K562 (cell line): ENCODE measurements at regions of chr16 and their contacts with region 1.

Region 1: DNA sequence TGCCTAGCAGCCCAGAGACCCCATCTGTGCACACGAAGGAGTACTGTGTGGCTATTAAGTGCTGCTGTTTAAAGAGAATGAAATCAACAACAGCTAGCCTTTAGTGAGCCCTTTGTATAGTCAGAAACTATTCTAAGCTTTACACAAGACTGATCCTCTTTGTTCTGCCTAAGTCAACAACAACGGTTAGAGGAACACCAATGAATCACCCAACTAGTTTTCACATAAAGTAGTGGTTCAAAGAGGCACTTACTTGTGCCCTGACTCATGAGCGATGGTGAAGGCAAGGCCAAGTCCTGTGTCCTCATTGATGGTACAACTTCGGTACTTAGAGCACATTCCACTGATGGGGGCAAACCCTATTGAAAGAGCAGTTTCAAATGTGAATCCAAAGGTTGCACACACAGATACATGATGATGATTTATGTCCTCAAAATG is 75.8 kb downstream of the ADAMTS18 start:
- DNase-seq: no peak
- ATAC-seq: no peak
- H3K4me3 ChIP-seq: no peak overlapping the region
- H3K27ac ChIP-seq: no peak overlapping the region
- H3K4me1 ChIP-seq: no peaks in the 10 kb centered on the region
- H3K27me3 ChIP-seq: no peaks in the 10 kb centered on the region; a peak in 2 of 5 replicates
- CTCF ChIP-seq: no peak
- EP300 ChIP-seq: no peak
- POLR2A ChIP-seq: no peak
- RAD21 ChIP-seq: no peak

Region 2: GRCh38 chr16:77445324-77445723 is 86.2 kb after region 1 on chr16:
- CTCF ChIA-PET with region 1: no interaction called
- POLR2A ChIA-PET with region 1: no interaction called
- in situ Hi-C with region 1: loop called (anchors 5 kb)
- intact Hi-C with region 1: no loop called
- DNase-seq: no peak
- ATAC-seq: no peak
- H3K4me3 ChIP-seq: no peak overlapping the region
- H3K27ac ChIP-seq: no peak overlapping the region
- H3K4me1 ChIP-seq: no peaks in the 10 kb centered on the region
- H3K27me3 ChIP-seq: no peaks in the 10 kb centered on the region
- CTCF ChIP-seq: no peak
- EP300 ChIP-seq: no peak
- POLR2A ChIP-seq: no peak
- RAD21 ChIP-seq: no peak

Region 3: DNA sequence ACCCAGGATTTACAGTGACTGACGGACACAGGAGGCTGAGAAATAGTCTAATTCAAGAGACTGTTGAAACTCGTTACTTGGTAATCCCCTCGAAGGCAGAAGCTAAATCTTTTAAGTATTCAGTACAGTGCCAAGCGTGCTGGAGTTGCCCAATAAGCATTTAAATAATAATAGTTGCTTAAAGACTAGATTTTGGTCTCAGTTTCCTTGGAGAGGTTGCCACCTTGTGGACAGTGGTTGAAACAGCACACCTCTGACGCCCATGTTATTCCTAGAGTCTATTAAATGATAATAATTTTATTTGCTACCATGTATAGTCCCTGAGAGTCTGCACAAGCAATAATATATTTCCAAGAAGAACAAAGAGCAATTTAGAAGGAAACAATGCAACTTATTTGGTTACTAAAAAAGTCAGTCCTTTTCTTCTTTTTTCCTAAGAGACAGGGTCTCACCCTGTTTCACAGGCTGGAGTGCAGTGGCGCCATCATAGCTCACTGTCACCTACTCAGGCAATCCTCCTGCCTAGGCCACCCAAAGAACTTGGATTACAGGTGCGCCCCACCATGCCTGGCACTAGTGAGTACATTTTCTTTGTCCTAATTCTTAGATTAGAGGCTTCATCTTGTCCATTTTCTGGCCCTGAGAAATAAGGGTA is 225.2 kb after region 1 on chr16:
- CTCF ChIA-PET with region 1: no interaction called
- POLR2A ChIA-PET with region 1: no interaction called
- in situ Hi-C with region 1: no loop called
- intact Hi-C with region 1: no loop called
- DNase-seq: peak; percentile 41 to 59 (median 56)
- ATAC-seq: peak; percentile 74
- H3K4me3 ChIP-seq: no peak overlapping the region
- H3K27ac ChIP-seq: no peak overlapping the region
- H3K4me1 ChIP-seq: no peaks in the 10 kb centered on the region
- H3K27me3 ChIP-seq: peaks cover 2 to 6% of the 10 kb centered on the region in 2 experiments; a peak in 1 of 5 replicates
- CTCF ChIP-seq: peak; percentile 67 to 90 (median 85)
- EP300 ChIP-seq: no peak
- POLR2A ChIP-seq: no peak
- RAD21 ChIP-seq: peak; percentile 79 to 89

Region 4: GRCh38 chr16:77736879-77737278 is 377.8 kb after region 1 on chr16:
- CTCF ChIA-PET with region 1: no interaction called
- POLR2A ChIA-PET with region 1: no interaction called
- in situ Hi-C with region 1: no loop called
- intact Hi-C with region 1: no loop called
- DNase-seq: no peak
- ATAC-seq: no peak
- H3K4me3 ChIP-seq: no peak overlapping the region
- H3K27ac ChIP-seq: no peak overlapping the region
- H3K4me1 ChIP-seq: peaks cover 0 to 5% of the 10 kb centered on the region in 2 experiments; a peak in 2 of 5 replicates
- H3K27me3 ChIP-seq: no peaks in the 10 kb centered on the region
- CTCF ChIP-seq: no peak
- EP300 ChIP-seq: no peak
- POLR2A ChIP-seq: no peak
- RAD21 ChIP-seq: no peak